AG04450 (cell line): ENCODE measurements at regions of chr10 and their contacts with region 1.

Region 1: DNA sequence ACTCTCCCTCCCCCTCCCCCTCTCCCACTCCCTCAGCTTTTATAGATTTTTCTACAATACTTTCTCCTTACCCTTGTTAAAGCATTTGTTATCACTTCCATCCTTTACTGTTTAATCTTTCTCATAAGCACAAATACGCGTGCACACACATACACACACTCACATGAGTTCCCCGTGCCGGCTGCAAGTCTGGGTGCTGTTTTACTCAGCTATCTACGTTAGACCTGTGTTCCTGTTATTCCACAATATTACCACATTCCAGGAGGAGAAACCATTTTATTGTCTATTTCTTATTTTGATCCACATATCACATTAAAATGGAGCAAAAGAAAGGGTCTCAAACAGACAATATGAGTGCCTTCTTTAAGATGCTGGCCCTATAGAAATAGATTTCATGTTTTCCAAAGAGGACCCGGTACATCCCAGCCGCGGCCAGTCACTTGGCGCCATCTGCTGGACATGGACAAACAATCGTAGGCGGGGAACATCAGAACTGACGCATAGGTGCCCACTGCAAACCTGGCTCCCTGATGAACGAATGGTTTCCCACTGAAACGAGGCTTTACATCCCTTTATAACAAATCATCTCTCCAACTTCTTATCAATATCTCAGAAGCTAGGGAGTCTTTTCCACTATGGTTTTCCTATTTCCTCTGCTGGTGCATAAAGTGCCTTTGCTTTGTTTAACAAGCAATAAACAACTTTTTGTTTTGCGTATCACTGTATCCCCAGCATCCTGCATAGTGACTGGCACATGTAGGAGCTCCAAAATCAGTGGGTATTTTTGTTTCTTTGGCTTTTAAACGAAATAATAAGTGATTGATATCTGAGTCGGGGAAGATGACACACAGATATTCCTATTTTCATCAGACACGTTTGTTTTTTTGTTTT is 25.2 kb upstream of the OPTN start:
- DNase-seq: peak; percentile 21
- H3K4me3 ChIP-seq: no peak overlapping the region
- H3K27ac ChIP-seq: no peak overlapping the region
- H3K27me3 ChIP-seq: peaks cover 4% of the 10 kb centered on the region
- CTCF ChIP-seq: peak; percentile 89

Region 2: DNA sequence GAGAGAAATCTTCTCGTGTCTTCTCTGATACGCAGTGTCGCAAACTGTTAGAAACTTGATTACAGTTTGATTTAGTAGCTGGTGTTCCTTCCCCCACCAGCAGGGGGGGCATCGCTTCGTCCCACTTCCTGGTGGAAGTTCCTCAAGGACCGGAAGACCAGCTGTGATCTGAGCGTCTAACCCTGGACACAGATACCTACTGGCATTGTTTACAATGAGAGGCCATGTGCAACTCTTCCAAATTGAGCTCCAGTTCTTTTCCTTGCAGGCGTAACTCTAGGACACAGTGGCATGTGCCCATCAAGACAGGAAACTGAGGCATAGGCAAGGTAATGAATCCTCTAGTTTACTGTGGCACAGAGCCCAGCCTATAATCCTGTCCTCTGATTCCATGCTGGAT is 292.3 kb before region 1 on chr10:
- CTCF ChIA-PET with region 1: interaction called, 13 read pairs
- POLR2A ChIA-PET with region 1: no interaction called
- DNase-seq: no peak
- H3K4me3 ChIP-seq: no peak overlapping the region
- H3K27ac ChIP-seq: no peak overlapping the region
- H3K27me3 ChIP-seq: no peaks in the 10 kb centered on the region
- CTCF ChIP-seq: peak; percentile 67

Region 3: DNA sequence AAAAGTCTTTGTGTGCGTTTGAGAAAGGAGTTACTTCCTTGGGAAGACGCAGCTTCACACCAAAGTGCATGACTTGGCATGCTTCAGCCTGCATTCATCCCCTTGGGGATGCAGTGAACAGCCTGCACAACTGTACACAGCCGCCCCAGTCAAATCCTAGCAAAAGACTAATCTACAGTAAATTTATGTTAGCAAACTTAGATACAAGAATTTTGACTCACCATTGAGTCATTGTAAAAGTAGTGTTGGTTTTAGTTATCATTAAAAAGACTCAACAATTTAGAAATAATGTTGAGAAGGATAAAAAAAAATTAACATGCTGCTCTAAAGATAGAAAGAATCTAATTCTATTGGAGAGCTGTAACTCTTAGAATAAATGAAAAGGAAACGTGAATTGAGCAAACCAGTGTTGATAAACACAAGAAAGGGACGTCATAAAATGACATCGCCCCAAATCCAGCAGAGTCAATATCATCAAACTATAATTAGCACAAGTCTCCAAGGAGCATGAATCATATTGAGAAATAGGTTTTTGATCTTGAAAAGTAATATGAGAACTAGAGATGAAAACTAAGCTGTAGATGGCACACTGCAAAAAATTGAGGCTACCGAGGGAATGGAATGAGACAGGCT is 13.3 kb after region 1 on chr10:
- CTCF ChIA-PET with region 1: interaction called, 11 read pairs
- POLR2A ChIA-PET with region 1: no interaction called
- DNase-seq: peak; percentile 38
- H3K4me3 ChIP-seq: no peak overlapping the region
- H3K27ac ChIP-seq: peak overlapping the region; percentile 72
- H3K27me3 ChIP-seq: no peaks in the 10 kb centered on the region
- CTCF ChIP-seq: no peak

Region 4: GRCh38 chr10:13106387-13107045 is 31.7 kb after region 1 on chr10:
- CTCF ChIA-PET with region 1: no interaction called
- POLR2A ChIA-PET with region 1: no interaction called
- DNase-seq: no peak
- H3K4me3 ChIP-seq: no peak overlapping the region
- H3K27ac ChIP-seq: no peak overlapping the region
- H3K27me3 ChIP-seq: no peaks in the 10 kb centered on the region
- CTCF ChIP-seq: no peak